Activated T-helper 1 cell treated with anti-CD3 and anti-CD28 coated beads, Interleukin-12 subunit alpha, Interleukin-12 subunit beta, Interleukin-2, Interleukin-4 antibody, amounts not matched to agents 30 ng/mL and 10 ng/mL and 1 ng/mL, durations not matched to agents 14 hours and 24 hours and 36 hours (primary cell): ENCODE measurements at regions of chr15 and their contacts with region 1.

Region 1: DNA sequence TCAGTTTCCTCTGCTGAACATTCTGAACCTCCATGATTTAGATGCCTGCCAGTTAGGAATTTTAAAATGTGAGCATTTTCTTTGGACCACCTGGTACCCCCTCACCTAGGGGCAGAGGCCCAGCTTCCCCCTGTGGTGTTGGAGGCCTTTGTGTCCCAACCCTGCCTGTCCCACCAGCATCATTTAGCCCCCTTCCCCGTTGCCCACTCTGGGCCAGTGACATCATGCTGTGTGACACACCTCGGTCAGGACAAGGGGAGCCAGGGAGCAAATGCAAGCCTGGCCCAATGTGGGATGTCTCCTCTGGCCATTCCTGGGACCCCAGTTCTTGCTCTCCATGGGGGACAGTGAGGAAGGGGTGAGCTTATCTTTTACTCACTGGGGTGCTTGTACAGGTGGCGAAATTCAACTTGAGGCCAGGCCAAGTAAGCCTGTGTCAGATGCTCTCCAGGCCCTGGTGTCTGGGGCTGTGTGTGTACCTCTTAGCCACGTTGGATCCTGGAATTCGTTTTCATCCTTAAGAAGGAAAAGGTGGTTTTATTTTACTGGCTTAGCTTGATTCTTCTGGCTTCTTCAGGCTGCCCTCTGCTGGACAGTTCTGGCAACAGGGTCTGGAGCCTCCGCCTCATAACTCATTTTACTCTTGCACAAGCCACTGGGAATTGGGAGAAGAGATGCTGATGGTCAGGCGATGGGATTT is 49.7 kb upstream of the MYZAP start:
- DNase-seq: no peak
- H3K4me3 Mint-ChIP-seq: no peak overlapping the region
- H3K27ac Mint-ChIP-seq: no peak overlapping the region
- H3K4me1 Mint-ChIP-seq: peaks cover 15% of the 10 kb centered on the region
- H3K27me3 Mint-ChIP-seq: peaks cover 2% of the 10 kb centered on the region

Region 2: GRCh38 chr15:56821721-56822425 is 720.1 kb before region 1 on chr15:
- intact Hi-C with region 1: loop called (anchors 10 kb)
- DNase-seq: peak; percentile 7
- H3K4me3 Mint-ChIP-seq: no peak overlapping the region
- H3K27ac Mint-ChIP-seq: no peak overlapping the region
- H3K4me1 Mint-ChIP-seq: peaks cover 7% of the 10 kb centered on the region
- H3K27me3 Mint-ChIP-seq: peaks cover 7% of the 10 kb centered on the region

Region 3: DNA sequence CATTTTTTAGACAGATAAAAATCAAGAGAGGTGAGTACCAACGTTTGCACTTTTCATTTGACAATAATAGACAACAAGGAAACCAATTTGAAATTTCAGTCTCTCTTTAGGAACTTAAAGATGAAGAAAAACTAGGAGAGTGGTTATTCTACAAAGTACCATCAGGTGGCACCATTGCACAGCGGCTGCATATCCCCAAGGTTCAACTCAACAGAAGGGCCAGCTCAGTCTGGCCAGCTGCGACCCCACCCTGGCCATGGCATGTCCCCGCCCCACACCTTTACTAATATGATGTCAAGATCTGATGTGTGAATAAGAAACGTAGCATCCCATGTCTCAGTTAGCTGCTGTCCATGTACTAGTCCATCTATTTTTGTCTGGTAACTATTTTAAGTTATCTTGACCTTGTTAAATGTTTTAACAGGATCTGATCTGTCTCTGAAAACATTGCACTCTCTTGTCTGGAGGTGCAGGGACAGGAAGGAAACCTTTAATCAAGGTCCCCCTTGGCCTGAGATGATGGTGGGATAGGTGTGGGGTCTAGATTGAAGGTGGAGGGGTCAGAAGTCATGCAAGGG is 201.2 kb before region 1 on chr15:
- intact Hi-C with region 1: loop called (anchors 1 kb)
- DNase-seq: no peak
- H3K4me3 Mint-ChIP-seq: no peak overlapping the region
- H3K27ac Mint-ChIP-seq: no peak overlapping the region
- H3K4me1 Mint-ChIP-seq: no peaks in the 10 kb centered on the region
- H3K27me3 Mint-ChIP-seq: peaks cover 14% of the 10 kb centered on the region

Region 4: GRCh38 chr15:57485869-57486268 is 56.1 kb before region 1 on chr15:
- intact Hi-C with region 1: no loop called
- DNase-seq: no peak
- H3K4me3 Mint-ChIP-seq: no peak overlapping the region
- H3K27ac Mint-ChIP-seq: no peak overlapping the region
- H3K4me1 Mint-ChIP-seq: no peaks in the 10 kb centered on the region
- H3K27me3 Mint-ChIP-seq: peaks cover 32% of the 10 kb centered on the region